SK-N-SH (cell line): ENCODE measurements at regions of chr4 and their contacts with region 1.

Region 1: GRCh38 chr4:6282314-6282771 is 12.7 kb downstream of the WFS1 start:
- DNase-seq: no peak
- H3K4me3 ChIP-seq: no peak overlapping the region
- H3K27ac ChIP-seq: no peak overlapping the region; a peak in 1 of 4 replicates
- H3K4me1 ChIP-seq: peaks cover 0 to 51% of the 10 kb centered on the region in 2 experiments; a peak in 1 of 4 replicates
- H3K27me3 ChIP-seq: no peaks in the 10 kb centered on the region
- CTCF ChIP-seq: no peak
- EP300 ChIP-seq: no peak
- RAD21 ChIP-seq: no peak

Region 2: DNA sequence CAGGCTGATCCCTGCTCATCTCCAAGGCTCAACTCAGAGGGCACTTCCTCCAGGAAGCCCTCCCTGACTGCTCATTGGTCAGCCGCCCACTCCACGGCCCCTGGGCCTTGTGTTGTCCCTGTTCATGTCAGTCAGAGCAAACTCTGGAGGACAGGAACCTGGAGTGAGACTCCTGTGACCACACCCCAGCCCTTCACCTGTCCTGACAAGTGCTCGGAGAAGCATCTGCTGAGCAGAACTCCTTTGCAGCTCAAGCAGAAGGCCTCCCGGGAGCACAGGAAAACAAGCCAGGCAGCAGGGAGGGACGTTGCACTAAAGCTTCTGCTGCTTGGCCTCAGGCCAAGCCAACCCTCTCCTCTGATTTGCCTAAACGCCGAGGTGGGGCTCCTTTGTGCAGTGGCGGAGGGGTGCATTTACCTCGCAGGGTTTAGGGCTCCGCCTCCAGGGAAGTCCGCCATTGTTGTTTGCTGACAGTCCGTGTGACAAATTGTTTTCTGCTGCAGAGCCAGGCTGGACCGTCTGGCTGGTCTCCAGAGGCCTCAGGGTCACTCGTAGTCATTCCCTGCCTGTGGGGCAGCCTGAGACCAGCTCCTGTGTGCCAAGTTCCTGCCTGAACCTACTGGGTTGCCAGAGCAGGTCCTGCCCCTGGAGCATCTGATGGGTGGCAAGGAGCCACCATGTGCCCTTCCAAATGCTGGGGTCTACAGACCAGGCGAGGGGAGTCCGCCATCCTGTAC is 325.9 kb before region 1 on chr4:
- CTCF ChIA-PET with region 1: no interaction called
- POLR2A ChIA-PET with region 1: no interaction called
- DNase-seq: peak; percentile 43
- H3K4me3 ChIP-seq: no peak overlapping the region
- H3K27ac ChIP-seq: peak overlapping the region in 1 of 2 experiments; percentile 28; a peak in 2 of 4 replicates
- H3K4me1 ChIP-seq: peaks cover 0 to 37% of the 10 kb centered on the region in 2 experiments; a peak in 1 of 4 replicates
- H3K27me3 ChIP-seq: no peaks in the 10 kb centered on the region
- CTCF ChIP-seq: no peak
- EP300 ChIP-seq: no peak
- RAD21 ChIP-seq: no peak

Region 3: DNA sequence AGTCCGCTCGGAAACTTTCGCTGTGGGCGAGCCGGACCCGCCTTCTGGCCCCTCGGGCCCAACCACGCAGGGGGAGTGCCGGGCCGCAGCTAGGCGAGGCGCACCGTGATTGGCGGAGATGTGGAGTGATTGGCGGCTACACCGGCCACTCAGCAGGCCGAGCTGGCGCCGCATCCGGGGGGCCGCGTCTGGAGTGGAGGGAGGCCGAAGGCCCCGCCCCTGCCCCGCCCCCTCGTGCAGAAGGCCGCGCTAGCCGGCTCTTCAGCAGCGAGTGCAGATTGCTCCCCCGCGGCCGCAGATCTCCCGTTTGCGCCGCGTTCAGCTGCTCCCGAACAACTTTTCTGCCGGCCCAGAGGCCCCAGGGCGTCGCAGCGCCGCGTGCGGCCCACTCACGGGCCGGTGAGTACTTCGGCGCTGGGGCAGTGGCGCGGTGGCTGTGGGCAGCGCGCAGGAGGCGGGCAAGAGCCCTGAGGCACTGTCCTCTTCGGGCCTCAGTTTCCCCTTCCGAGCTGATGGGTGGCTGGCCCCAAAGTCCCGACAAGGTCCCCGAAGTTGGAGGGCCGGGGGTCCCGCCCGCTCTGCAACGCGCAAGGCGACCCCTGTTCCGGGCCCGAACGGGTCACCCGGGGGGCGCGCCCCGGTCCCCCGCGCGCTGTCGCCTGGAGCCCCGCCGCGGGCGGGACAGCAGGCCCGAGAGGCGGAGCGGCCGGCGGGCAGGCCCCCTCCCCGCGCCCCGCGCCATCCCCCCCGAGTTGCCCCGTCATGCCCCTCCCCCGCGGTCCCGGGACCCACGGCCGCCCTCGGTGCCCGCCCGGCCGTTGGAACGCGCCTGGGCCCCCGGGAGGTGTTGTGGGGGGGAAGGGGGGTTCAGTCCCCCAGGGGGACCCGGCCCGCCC is 12.5 kb before region 1 on chr4 and contains the start of gene WFS1:
- CTCF ChIA-PET with region 1: interaction called, 14 read pairs
- POLR2A ChIA-PET with region 1: no interaction called
- DNase-seq: peak; percentile 100
- H3K4me3 ChIP-seq: peak within 1 kb of the TSS; percentile 82 to 97
- H3K27ac ChIP-seq: peak within 1 kb of the TSS in 1 of 2 experiments; percentile 75; a peak in 2 of 4 replicates
- H3K4me1 ChIP-seq: peaks cover 7 to 45% of the 10 kb centered on the region in 2 experiments; a peak in 3 of 4 replicates
- H3K27me3 ChIP-seq: no peaks in the 10 kb centered on the region
- CTCF ChIP-seq: no peak
- EP300 ChIP-seq: no peak
- RAD21 ChIP-seq: no peak
- polyA plus RNA-seq, gene WFS1: 15.8 and 18.7 TPM in 2 replicates

Region 4: DNA sequence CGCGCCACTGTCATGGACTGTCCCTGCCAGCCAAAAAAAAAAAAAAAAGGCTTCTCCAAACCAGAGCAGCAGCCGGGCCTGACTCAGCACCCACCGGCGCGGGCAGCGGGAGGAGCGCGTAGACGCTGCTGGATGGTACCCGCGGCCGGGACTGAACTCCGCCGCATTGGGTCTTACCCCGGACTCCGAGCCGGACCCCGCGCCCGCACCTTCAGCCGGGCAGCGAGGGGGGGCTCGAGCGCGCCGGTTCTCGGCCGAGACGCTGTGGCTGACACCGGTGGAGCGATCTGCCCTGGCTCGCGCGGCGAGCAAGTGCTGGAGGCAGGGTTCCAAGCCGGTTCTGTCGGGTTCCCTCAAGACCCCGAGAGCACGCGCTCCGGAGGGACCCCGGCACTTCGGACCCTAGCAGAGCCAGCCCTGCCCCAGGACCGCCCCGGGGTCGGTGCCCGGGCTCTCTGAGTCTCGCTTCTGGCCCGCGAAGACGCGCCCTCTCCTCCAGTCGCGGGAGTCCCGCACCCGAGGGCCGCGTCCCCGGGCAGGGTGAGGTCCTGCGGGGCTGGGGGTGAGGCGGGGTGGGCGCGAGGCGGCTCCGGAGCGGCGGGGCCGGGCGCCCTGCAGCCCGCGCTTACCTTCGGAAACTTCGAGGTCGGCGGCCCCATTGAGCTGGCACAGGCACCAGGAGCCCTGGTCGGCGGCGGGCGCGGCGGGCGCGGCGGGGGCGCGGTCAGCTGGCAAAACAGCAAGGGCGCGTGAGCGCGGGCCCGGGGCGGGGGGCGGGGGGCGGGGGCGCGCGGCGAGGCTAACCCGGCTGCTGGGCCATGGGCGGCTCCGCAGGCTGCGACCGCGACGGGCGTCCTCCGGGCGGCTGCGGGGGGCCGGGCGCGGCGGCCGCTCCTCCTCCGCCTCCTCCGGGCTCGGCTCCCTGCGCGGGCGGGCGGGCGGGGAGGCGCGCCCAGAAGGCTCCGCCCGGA is 280.9 kb after region 1 on chr4:
- CTCF ChIA-PET with region 1: no interaction called
- POLR2A ChIA-PET with region 1: no interaction called
- DNase-seq: peak; percentile 86
- H3K4me3 ChIP-seq: peak overlapping the region in 1 of 2 experiments; percentile 32; a peak in 1 of 4 replicates
- H3K27ac ChIP-seq: no peak overlapping the region
- H3K4me1 ChIP-seq: peaks cover 0 to 5% of the 10 kb centered on the region in 2 experiments; a peak in 1 of 4 replicates
- H3K27me3 ChIP-seq: peaks cover 31% of the 10 kb centered on the region
- CTCF ChIP-seq: no peak
- EP300 ChIP-seq: no peak
- RAD21 ChIP-seq: no peak